ENCODE measurements at regions of chr22 and their contacts with region 1.

Region 1: GRCh38 chr22:23786752-23787599 is at the start of gene SMARCB1:
- DNase-seq: peak; percentile 80 to 96 (median 88)
- ATAC-seq: peak; percentile 76
- H3K4me3 ChIP-seq: peak within 1 kb of the TSS; percentile 83
- H3K4me3 Mint-ChIP-seq: peak within 1 kb of the TSS; percentile 91
- H3K27ac ChIP-seq: peak within 1 kb of the TSS; percentile 93 to 98
- H3K27ac Mint-ChIP-seq: peak within 1 kb of the TSS; percentile 90
- H3K4me1 ChIP-seq: peaks cover 44% of the 10 kb centered on the region
- H3K4me1 Mint-ChIP-seq: peaks cover 35% of the 10 kb centered on the region
- H3K27me3 ChIP-seq: no peaks in the 10 kb centered on the region
- H3K27me3 Mint-ChIP-seq: no peaks in the 10 kb centered on the region
- CTCF ChIP-seq: no peak
- total RNA-seq, gene SMARCB1: 40.3 to 41.7 TPM

Region 2: DNA sequence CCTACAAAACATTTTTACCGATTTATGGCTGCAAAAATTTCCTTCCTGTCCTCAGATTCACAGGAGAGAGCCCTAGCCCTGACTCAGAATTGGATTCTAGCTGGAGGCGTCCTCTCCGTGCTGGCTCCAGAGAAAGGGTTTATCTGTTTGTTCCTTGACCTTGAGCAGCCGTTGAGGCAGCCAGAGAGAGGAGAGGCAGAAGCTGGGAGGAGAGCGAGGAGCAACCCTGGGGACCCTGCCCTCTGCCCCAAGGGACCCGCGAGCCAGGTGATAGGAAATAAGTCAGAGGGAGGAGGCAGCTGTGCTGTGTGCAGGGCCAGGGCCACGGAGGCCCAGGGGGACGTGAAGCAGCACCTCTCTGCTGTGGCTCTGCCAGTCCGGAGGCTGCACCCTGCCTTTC is 282.5 kb before region 1 on chr22:
- CTCF ChIA-PET with region 1: no interaction called
- POLR2A ChIA-PET with region 1: no interaction called
- intact Hi-C with region 1: no loop called
- DNase-seq: no peak
- ATAC-seq: no peak
- H3K4me3 ChIP-seq: no peak overlapping the region
- H3K4me3 Mint-ChIP-seq: no peak overlapping the region
- H3K27ac ChIP-seq: no peak overlapping the region
- H3K27ac Mint-ChIP-seq: no peak overlapping the region
- H3K4me1 ChIP-seq: no peaks in the 10 kb centered on the region
- H3K4me1 Mint-ChIP-seq: no peaks in the 10 kb centered on the region
- H3K27me3 ChIP-seq: peaks cover 0 to 2% of the 10 kb centered on the region in 2 experiments
- H3K27me3 Mint-ChIP-seq: peaks cover 4% of the 10 kb centered on the region
- CTCF ChIP-seq: no peak

Region 3: GRCh38 chr22:23639661-23640060 is 147.3 kb before region 1 on chr22:
- CTCF ChIA-PET with region 1: no interaction called
- POLR2A ChIA-PET with region 1: no interaction called
- intact Hi-C with region 1: no loop called
- DNase-seq: no peak
- ATAC-seq: no peak
- H3K4me3 ChIP-seq: no peak overlapping the region
- H3K4me3 Mint-ChIP-seq: no peak overlapping the region
- H3K27ac ChIP-seq: no peak overlapping the region
- H3K27ac Mint-ChIP-seq: no peak overlapping the region
- H3K4me1 ChIP-seq: no peaks in the 10 kb centered on the region
- H3K4me1 Mint-ChIP-seq: no peaks in the 10 kb centered on the region
- H3K27me3 ChIP-seq: no peaks in the 10 kb centered on the region
- H3K27me3 Mint-ChIP-seq: no peaks in the 10 kb centered on the region
- CTCF ChIP-seq: no peak

Region 4: GRCh38 chr22:23696326-23696851 is 90.6 kb before region 1 on chr22:
- CTCF ChIA-PET with region 1: no interaction called
- POLR2A ChIA-PET with region 1: interaction called, 23 read pairs
- intact Hi-C with region 1: loop called in 1 of 2 experiments (anchors 5 kb)
- DNase-seq: peak; percentile 71 to 92 (median 76)
- ATAC-seq: peak; percentile 97
- H3K4me3 ChIP-seq: peak overlapping the region; percentile 64
- H3K4me3 Mint-ChIP-seq: peak overlapping the region; percentile 89
- H3K27ac ChIP-seq: peak overlapping the region; percentile 91 to 97
- H3K27ac Mint-ChIP-seq: peak overlapping the region; percentile 97
- H3K4me1 ChIP-seq: peaks cover 53% of the 10 kb centered on the region
- H3K4me1 Mint-ChIP-seq: peaks cover 46% of the 10 kb centered on the region
- H3K27me3 ChIP-seq: no peaks in the 10 kb centered on the region
- H3K27me3 Mint-ChIP-seq: no peaks in the 10 kb centered on the region
- CTCF ChIP-seq: no peak

Region 5: DNA sequence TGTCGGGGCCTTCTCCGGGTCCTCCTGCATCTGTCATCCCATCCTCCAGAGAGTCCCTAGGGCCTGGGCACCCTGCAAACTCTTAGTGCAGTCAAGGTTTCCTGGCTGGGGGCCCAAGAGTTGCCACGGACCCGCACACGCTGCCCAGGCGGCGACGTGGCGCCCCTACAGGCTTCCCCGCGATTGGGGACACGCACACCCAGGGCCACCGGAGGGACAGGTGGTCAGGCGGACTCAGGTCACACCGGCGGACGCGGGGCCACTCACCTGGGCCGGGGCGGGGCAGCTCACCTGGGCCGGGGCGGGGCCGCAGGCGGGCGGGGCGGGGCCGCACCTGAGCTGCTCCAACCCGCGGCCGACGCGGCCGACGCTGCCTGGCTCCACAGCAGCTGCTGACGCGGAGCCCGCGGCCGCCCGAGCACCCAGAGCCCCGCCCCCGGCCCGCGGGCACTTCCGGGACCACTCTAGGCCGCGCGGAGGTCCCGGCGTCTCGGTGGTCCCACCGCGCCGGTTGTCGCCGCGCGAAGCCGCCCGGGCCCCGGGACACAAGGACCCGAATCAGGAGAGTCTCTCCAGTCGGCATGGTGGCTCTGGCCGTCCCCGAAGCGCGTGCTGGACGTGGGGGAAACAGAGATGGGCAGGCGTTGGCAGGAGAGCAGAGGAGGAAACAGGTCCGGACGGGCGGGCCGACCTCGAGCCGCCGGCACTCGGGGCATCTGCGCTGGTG is 36.1 kb before region 1 on chr22 and contains the start of gene ZNF70:
- CTCF ChIA-PET with region 1: no interaction called
- POLR2A ChIA-PET with region 1: interaction called, 10 read pairs
- intact Hi-C with region 1: loop called (anchors 1 to 2 kb)
- DNase-seq: peak; percentile 67 to 95 (median 84)
- ATAC-seq: peak; percentile 99
- H3K4me3 ChIP-seq: peak within 1 kb of the TSS; percentile 84
- H3K4me3 Mint-ChIP-seq: peak within 1 kb of the TSS; percentile 81
- H3K27ac ChIP-seq: peak within 1 kb of the TSS; percentile 43 to 73
- H3K27ac Mint-ChIP-seq: peak within 1 kb of the TSS; percentile 72
- H3K4me1 ChIP-seq: peaks cover 17% of the 10 kb centered on the region
- H3K4me1 Mint-ChIP-seq: peaks cover 12% of the 10 kb centered on the region
- H3K27me3 ChIP-seq: no peaks in the 10 kb centered on the region
- H3K27me3 Mint-ChIP-seq: no peaks in the 10 kb centered on the region
- CTCF ChIP-seq: no peak
- total RNA-seq, gene ZNF70: 1.3 to 1.9 TPM

Region 6: DNA sequence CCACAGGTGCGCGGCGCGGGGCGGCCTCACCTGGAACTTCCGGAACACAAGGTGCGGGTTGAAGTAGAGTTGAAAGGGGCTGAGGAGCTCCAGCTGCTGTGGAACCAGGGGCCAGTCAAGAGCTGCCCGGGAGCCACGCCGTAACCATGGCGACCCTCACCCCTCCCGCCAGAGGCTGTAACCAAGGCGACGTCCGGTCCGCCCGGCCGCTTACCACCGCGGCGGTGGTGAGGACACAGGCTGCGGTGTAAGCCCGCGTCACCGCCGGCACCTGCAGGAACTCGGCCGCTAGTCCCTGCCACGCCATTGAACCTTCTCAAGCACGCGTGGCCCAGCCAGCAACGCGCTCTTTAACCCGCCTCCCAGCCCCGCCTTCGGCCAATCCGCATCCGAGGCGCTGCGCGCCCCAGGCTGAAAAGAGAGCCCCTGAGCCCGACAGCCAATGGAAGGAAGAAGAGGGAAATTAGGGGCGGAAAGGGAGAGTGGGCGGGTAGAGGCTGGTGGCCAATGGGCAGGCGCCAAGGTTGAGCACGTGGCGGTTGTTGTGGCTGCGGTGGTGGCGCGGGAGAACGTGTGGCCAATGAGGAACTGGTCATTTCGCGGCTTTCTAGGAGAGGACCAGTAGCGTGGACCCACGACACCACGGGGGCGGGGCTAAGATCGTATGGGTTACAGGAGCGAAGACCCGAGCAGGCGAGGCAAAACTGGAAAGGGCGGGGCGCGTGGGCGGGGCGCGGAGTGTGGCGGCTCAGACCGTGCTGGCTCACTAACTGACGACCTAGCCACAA is 51.9 kb after region 1 on chr22 and contains the start of gene DERL3:
- CTCF ChIA-PET with region 1: no interaction called
- POLR2A ChIA-PET with region 1: no interaction called
- intact Hi-C with region 1: loop called (anchors 2 kb)
- DNase-seq: peak; percentile 86 to 98 (median 94)
- ATAC-seq: peak; percentile 94
- H3K4me3 ChIP-seq: peak within 1 kb of the TSS; percentile 80
- H3K4me3 Mint-ChIP-seq: peak within 1 kb of the TSS; percentile 91
- H3K27ac ChIP-seq: no peak within 1 kb of the TSS
- H3K27ac Mint-ChIP-seq: peak within 1 kb of the TSS; percentile 52
- H3K4me1 ChIP-seq: peaks cover 25% of the 10 kb centered on the region
- H3K4me1 Mint-ChIP-seq: peaks cover 19% of the 10 kb centered on the region
- H3K27me3 ChIP-seq: no peaks in the 10 kb centered on the region
- H3K27me3 Mint-ChIP-seq: no peaks in the 10 kb centered on the region
- CTCF ChIP-seq: no peak
- total RNA-seq, gene DERL3: 0.66 to 0.98 TPM

Region 7: DNA sequence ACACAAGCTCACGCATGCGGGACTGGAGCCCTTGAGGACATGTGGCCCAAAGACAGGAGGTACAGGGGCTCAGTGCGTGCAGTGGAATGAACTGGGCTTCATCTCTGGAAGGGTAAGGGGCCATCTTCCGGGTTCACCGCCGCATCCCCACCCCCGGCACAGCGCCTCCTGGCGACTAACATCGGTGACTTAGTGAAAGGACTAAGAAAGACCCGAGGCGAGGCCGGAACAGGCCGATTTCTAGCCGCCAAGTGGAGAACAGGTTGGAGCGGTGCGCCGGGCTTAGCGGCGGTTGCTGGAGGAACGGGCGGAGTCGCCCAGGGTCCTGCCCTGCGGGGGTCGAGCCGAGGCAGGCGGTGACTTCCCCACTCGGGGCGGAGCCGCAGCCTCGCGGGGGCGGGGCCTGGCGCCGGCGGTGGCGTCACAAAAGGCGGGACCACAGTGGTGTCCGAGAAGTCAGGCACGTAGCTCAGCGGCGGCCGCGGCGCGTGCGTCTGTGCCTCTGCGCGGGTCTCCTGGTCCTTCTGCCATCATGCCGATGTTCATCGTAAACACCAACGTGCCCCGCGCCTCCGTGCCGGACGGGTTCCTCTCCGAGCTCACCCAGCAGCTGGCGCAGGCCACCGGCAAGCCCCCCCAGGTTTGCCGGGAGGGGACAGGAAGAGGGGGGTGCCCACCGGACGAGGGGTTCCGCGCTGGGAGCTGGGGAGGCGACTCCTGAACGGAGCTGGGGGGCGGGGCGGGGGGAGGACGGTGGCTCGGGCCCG is 107.2 kb after region 1 on chr22 and contains the start of gene MIF:
- CTCF ChIA-PET with region 1: no interaction called
- POLR2A ChIA-PET with region 1: interaction called, 8 read pairs
- intact Hi-C with region 1: loop called in 1 of 2 experiments (anchors 1 kb)
- DNase-seq: peak; percentile 85 to 98 (median 94)
- ATAC-seq: peak; percentile 78
- H3K4me3 ChIP-seq: peak within 1 kb of the TSS; percentile 79
- H3K4me3 Mint-ChIP-seq: peak within 1 kb of the TSS; percentile 95
- H3K27ac ChIP-seq: peak within 1 kb of the TSS; percentile 84 to 91
- H3K27ac Mint-ChIP-seq: peak within 1 kb of the TSS; percentile 97
- H3K4me1 ChIP-seq: peaks cover 30% of the 10 kb centered on the region
- H3K4me1 Mint-ChIP-seq: peaks cover 29% of the 10 kb centered on the region
- H3K27me3 ChIP-seq: no peaks in the 10 kb centered on the region
- H3K27me3 Mint-ChIP-seq: no peaks in the 10 kb centered on the region
- CTCF ChIP-seq: peak; percentile 90
- total RNA-seq, gene MIF: 213 to 226 TPM